ENCODE measurements at regions of chr10 and their contacts with region 1.

Region 1: DNA sequence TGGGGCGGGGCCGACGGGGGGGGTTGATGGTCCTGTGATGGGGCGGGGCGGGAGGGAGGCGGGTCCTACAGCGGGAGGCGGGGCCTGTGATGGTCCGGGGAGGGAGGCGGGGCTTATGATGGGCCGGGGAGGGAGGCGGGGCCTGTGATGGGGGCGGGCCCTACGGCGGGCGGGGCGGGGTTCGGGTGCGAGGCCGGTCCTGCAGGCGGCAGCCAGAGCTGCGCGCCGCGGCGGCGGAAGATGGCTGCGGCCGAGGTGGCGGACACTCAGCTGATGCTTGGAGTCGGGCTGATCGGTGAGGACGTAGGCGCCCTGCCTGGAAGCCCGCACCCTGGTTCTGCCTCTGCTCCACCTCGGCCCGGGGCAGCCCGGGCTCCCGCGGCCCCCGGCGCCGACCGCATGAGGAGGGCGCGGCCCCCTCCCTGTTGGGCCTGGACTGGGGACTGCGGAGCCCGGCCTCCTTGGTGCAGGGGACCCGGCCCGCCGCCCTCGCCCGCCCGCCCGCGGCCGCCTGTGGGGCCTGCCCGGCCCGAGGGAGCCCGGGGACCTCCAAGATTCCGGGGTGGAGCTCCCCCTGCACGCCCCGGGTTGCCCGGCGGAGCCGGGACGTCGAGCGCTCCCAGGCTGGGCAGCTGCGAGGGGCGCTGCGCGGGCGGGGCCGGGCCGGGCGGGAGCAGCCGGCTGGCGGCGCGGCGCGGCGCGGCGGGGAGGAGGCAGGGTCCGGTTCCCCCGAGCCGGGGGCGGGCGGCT is at the start of gene DENND10:
- DNase-seq: peak; percentile 86
- ATAC-seq: peak; percentile 89
- H3K4me3 ChIP-seq: peak within 1 kb of the TSS; percentile 38 to 77 (median 68)
- H3K4me3 Mint-ChIP-seq: peak within 1 kb of the TSS; percentile 84
- H3K27ac ChIP-seq: peak within 1 kb of the TSS; percentile 2 to 4
- H3K27ac Mint-ChIP-seq: peak within 1 kb of the TSS; percentile 71
- H3K4me1 ChIP-seq: peaks cover 6 to 12% of the 10 kb centered on the region in 2 donors
- H3K4me1 Mint-ChIP-seq: peaks cover 10% of the 10 kb centered on the region
- H3K27me3 ChIP-seq: no peaks in the 10 kb centered on the region
- H3K27me3 Mint-ChIP-seq: no peaks in the 10 kb centered on the region
- CTCF ChIP-seq: no peak
- total RNA-seq, gene DENND10: 24.4 and 30.0 TPM in 2 replicates

Region 2: DNA sequence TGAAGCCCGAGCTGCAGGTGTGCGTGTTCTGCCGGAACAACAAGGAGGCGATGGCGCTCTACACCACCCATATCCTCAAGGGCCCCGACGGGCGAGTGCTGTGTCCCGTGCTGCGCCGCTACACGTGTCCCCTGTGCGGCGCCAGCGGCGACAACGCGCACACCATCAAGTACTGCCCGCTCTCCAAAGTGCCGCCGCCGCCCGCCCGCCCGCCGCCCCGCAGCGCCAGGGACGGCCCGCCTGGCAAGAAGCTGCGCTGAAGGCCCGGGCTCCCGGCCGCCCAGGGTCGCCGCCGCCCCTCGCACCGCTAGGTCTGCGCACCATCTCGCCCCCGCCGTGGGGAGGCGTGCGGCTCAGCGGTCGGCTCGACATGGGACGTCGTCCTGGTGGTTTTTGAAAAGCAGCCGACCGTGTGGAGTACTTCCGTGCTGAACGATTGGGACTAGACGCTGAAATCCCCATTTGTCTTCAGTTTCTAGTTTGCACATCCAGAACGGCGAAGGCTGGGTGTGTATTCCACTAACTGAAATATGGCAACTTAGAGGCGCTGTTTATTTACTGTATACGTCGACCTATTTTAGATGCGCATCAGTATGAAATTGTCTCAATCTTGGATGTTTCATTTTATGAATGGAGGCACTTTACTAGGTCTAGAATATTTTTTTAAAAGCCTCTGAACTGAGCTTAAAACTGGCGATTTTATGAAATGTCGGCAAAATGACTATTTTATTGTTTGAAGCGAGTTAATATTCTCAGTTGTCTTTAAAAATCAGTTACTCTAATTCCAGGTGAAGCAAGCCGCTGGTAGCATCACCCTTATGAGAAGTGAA is 73.4 kb before region 1 on chr10:
- CTCF ChIA-PET with region 1: no interaction called
- POLR2A ChIA-PET with region 1: no interaction called
- intact Hi-C with region 1: loop called (anchors 1 kb)
- DNase-seq: peak; percentile 86
- ATAC-seq: peak; percentile 68
- H3K4me3 ChIP-seq: peak overlapping the region in 3 of 5 experiments; percentile 23 to 47 (median 39)
- H3K4me3 Mint-ChIP-seq: peak overlapping the region; percentile 81
- H3K27ac ChIP-seq: no peak overlapping the region
- H3K27ac Mint-ChIP-seq: peak overlapping the region; percentile 32
- H3K4me1 ChIP-seq: peaks cover 21% of the 10 kb centered on the region in 2 donors
- H3K4me1 Mint-ChIP-seq: peaks cover 24% of the 10 kb centered on the region
- H3K27me3 ChIP-seq: peaks cover 0 to 30% (median 8%) of the 10 kb centered on the region in 4 experiments
- H3K27me3 Mint-ChIP-seq: peaks cover 25% of the 10 kb centered on the region
- CTCF ChIP-seq: peak; percentile 24

Region 3: DNA sequence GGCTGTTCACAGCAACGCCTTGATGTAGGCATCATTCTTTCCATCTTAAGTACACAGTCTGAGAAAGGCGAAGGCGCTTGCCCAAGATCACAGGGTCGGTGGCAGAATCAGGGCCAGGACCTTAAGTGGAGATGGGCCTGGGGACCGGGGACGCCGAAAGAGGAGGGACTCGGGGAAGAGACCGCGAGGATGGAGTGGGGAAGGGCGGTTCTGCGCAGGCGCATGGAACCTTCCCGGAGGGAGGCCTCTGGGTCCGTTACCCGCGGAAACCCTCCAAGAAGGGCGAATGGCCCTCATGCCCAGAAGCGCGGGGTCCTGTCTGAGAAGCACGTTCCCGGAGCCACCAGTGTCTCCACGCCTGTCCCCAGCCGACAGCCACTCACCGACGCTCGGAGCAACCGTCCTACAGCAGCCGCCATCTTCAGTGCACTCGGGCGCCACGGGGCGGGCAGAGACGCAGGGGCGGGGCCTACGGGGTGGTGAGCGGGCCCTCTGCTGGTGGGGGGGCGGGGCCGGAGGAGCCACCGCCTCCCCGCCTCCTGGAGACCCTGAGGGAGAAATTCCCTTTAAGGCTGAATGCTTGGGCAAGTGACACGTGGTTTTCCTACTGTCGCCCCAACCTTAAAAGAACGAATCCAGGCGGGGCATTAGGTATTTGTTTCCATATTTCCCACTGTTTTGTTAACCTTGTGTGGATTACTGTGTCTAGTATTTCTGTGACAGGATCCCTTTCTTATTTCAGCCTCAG is 74.5 kb after region 1 on chr10 and contains the start of gene PRDX3:
- CTCF ChIA-PET with region 1: no interaction called
- POLR2A ChIA-PET with region 1: no interaction called
- intact Hi-C with region 1: loop called (anchors 2 kb)
- DNase-seq: peak; percentile 92
- ATAC-seq: peak; percentile 99
- H3K4me3 ChIP-seq: peak within 1 kb of the TSS; percentile 88 to 98 (median 89)
- H3K4me3 Mint-ChIP-seq: peak within 1 kb of the TSS; percentile 94
- H3K27ac ChIP-seq: peak within 1 kb of the TSS; percentile 68 to 71
- H3K27ac Mint-ChIP-seq: peak within 1 kb of the TSS; percentile 90
- H3K4me1 ChIP-seq: peaks cover 11 to 15% of the 10 kb centered on the region in 2 donors
- H3K4me1 Mint-ChIP-seq: peaks cover 28% of the 10 kb centered on the region
- H3K27me3 ChIP-seq: no peaks in the 10 kb centered on the region
- H3K27me3 Mint-ChIP-seq: no peaks in the 10 kb centered on the region
- CTCF ChIP-seq: peak; percentile 29
- total RNA-seq, gene PRDX3: 36.2 and 36.3 TPM in 2 replicates